HepG2 (cell line): ENCODE measurements at regions of chr6 and their contacts with region 1.

Region 1: DNA sequence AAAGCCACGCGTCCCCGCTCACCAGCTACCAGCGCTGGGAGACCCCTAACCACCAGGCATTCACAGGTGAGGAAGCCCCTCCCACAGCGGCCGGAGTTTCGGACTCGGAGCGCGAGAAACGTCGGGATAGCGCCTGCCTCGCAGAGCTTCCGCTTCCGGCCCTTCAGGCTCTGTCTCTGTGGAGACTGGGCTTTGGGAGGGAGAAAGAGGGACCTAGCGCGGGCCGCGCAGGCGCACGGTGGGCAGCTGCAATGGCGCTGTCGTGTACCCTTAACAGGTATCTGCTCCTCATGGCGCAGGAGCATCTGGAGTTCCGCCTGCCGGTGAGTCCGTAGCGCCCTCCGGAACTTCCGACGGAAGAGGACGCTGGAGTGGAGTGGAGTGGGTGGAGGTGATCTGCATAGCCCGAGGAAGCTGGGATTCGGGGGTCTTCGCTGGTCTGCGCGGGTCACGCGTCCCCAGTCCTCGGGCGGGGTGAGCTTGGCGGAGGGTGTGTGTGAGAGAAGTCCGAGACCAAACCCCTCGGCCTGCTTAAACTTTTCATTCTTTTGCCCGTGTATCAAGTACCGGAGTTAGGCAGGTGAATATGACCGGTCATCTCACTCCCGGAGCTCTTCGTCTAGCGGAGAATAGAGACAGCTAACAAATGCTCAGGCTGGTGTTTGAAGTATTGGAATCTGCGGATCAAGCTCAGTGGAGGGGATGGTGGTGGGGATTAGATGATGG is at the start of gene TRMT11:
- DNase-seq: peak; percentile 97
- ATAC-seq: peak; percentile 98
- H3K4me3 ChIP-seq: peak within 1 kb of the TSS; percentile 80 to 95 (median 84)
- H3K27ac ChIP-seq: peak within 1 kb of the TSS; percentile 87
- H3K4me1 ChIP-seq: peaks cover 62% of the 10 kb centered on the region
- H3K27me3 ChIP-seq: no peaks in the 10 kb centered on the region; a peak in 1 of 5 replicates
- CTCF ChIP-seq: peak; percentile 46
- EP300 ChIP-seq: peak in 1 of 2 experiments; percentile 6; a peak in 3 of 4 replicates
- POLR2A ChIP-seq: peak; percentile 96 to 98
- RAD21 ChIP-seq: peak; percentile 47
- total RNA-seq, gene TRMT11: 66.0 and 81.9 TPM in 2 replicates

Region 2: DNA sequence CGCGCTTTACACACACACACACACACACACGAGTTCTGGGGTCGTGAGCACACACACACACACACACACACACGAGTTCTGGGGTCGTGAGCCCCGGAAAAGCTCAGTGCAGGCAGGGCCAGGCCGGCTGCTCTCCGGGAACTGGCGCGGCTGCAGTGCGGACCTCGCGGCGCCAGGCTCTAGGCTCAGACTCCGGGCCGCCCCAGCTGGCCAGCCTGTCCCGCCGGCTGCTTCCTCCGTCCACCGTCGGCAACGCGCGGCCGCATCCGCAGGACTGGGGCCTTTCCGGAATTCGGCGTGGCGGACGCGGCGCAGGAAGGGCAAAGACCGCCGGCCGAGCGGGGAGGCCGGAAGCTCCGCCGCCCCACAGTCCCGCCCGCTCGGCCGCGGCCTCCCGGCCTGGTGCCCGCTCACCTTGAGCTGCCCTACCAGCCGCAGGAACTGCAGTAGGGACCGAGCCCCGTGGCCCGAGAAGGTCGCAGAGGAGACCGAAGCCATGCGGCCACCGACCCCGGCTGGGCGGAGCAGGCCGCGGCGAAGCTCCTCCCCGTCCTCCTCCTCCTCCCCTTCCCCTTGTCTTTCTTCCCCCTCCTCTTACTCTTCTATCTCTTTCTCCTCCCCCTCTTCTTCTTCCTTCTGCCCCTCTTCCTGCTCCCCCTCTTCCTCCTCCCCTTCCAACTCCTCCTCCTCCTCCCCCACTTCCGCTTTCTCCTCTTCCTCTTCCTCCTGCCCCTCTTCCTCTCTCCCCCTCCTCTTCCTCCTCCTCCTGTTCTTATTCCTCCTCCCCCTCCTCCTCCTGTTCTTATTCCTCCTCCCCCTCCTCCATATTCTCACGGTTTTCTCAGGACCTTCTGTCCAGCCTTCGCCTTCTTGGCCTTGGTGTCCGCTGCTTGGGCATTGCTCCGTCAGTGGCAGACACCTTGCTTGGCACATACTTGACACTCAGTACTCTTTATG is 684.8 kb before region 1 on chr6 and contains the start of gene HDDC2:
- CTCF ChIA-PET with region 1: no interaction called
- POLR2A ChIA-PET with region 1: interaction called, 15 read pairs
- in situ Hi-C with region 1: no loop called
- intact Hi-C with region 1: no loop called
- DNase-seq: peak; percentile 68
- ATAC-seq: peak; percentile 99
- H3K4me3 ChIP-seq: peak within 1 kb of the TSS; percentile 54 to 85 (median 84)
- H3K27ac ChIP-seq: peak within 1 kb of the TSS; percentile 67
- H3K4me1 ChIP-seq: peaks cover 32% of the 10 kb centered on the region
- H3K27me3 ChIP-seq: peaks cover 0 to 4% of the 10 kb centered on the region in 2 experiments; a peak in 1 of 5 replicates
- CTCF ChIP-seq: peak; percentile 7; the same call in 1 of the 2 replicates
- EP300 ChIP-seq: peak in 1 of 2 experiments; percentile 38; a peak in 2 of 4 replicates
- POLR2A ChIP-seq: peak; percentile 82 to 83
- RAD21 ChIP-seq: peak; percentile 71
- total RNA-seq, gene HDDC2: 78.7 and 90.7 TPM in 2 replicates

Region 3: GRCh38 chr6:125779924-125780539 is 206.4 kb before region 1 on chr6:
- CTCF ChIA-PET with region 1: no interaction called
- POLR2A ChIA-PET with region 1: interaction called, 13 read pairs
- in situ Hi-C with region 1: no loop called
- intact Hi-C with region 1: no loop called
- DNase-seq: peak; percentile 96
- ATAC-seq: peak; percentile 91
- H3K4me3 ChIP-seq: peak overlapping the region; percentile 60 to 85 (median 81)
- H3K27ac ChIP-seq: peak overlapping the region; percentile 83
- H3K4me1 ChIP-seq: peaks cover 30% of the 10 kb centered on the region
- H3K27me3 ChIP-seq: no peaks in the 10 kb centered on the region; a peak in 1 of 5 replicates
- CTCF ChIP-seq: no peak; the same call in 1 of the 2 replicates
- EP300 ChIP-seq: no peak; a peak in 1 of 4 replicates
- POLR2A ChIP-seq: no peak
- RAD21 ChIP-seq: no peak

Region 4: GRCh38 chr6:125899726-125900182 is 86.7 kb before region 1 on chr6:
- CTCF ChIA-PET with region 1: no interaction called
- POLR2A ChIA-PET with region 1: interaction called, 16 read pairs
- in situ Hi-C with region 1: no loop called
- intact Hi-C with region 1: no loop called
- DNase-seq: peak; percentile 86
- ATAC-seq: peak; percentile 99
- H3K4me3 ChIP-seq: peak overlapping the region; percentile 39 to 59 (median 56); a peak in 4 of 6 replicates
- H3K27ac ChIP-seq: peak overlapping the region; percentile 81
- H3K4me1 ChIP-seq: peaks cover 53% of the 10 kb centered on the region
- H3K27me3 ChIP-seq: no peaks in the 10 kb centered on the region
- CTCF ChIP-seq: peak; percentile 48
- EP300 ChIP-seq: peak in 1 of 2 experiments; percentile 58; a peak in 1 of 4 replicates
- POLR2A ChIP-seq: peak; percentile 54 to 56; a peak in 3 of 4 replicates
- RAD21 ChIP-seq: no peak

Region 5: DNA sequence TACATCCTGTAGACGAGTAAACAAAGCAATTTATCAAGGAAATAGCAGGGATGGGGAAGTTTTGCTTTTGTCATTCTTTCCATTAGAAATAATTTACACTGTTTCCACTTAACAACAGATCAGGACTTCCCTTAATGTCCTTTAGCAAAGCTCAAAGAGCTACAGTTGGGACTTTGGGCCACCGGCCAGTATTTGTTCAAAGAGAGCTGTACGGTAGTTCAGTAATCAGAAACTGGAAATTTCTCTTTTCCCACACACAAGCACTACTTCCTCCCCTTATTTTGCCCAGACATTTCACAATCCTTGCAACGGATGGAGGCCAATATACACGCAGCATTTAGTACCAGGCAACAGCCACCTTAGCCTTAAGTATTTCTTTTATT is 42.0 kb before region 1 on chr6:
- CTCF ChIA-PET with region 1: no interaction called
- POLR2A ChIA-PET with region 1: interaction called, 10 read pairs
- in situ Hi-C with region 1: no loop called
- intact Hi-C with region 1: no loop called
- DNase-seq: peak; percentile 98
- ATAC-seq: peak; percentile 96
- H3K4me3 ChIP-seq: peak overlapping the region in 2 of 3 experiments; percentile 35 to 56; a peak in 3 of 6 replicates
- H3K27ac ChIP-seq: peak overlapping the region; percentile 92
- H3K4me1 ChIP-seq: peaks cover 85% of the 10 kb centered on the region
- H3K27me3 ChIP-seq: no peaks in the 10 kb centered on the region
- CTCF ChIP-seq: no peak
- EP300 ChIP-seq: peak; percentile 56 to 88; a peak in 2 of 4 replicates
- POLR2A ChIP-seq: no peak
- RAD21 ChIP-seq: no peak

Region 6: DNA sequence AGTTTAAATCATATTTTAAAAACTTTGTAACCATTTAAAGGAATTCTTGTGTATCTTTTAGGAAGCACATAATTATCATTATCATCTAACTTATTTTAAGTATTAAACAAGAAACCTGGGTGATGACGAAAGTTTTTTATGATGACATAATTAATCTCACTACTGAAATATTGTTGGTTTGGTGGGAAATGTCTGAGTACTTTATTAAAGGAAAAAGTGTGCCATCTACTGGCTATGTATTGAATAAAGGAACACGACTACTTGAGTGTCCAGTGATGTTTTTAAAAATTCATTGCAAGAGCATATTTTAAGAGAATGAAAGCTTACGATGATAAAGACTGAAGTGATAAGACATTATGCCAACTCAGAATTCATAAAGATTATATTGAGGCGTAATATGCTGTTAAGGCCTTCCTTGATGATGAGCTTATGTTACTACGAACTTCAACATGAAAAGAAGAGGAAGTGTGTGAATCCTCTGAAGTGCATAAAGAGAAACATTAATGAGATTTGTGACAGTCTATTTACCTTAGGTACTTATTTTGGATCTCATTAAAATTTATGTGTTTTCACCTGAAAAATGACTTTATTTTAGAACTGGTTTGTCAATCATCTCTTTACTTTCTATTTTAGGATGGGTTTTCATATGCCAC is 12.1 kb before region 1 on chr6:
- CTCF ChIA-PET with region 1: no interaction called
- POLR2A ChIA-PET with region 1: interaction called, 11 read pairs
- in situ Hi-C with region 1: no loop called
- intact Hi-C with region 1: no loop called
- DNase-seq: peak; percentile 56
- ATAC-seq: peak; percentile 69
- H3K4me3 ChIP-seq: no peak overlapping the region
- H3K27ac ChIP-seq: no peak overlapping the region
- H3K4me1 ChIP-seq: no peaks in the 10 kb centered on the region
- H3K27me3 ChIP-seq: no peaks in the 10 kb centered on the region
- CTCF ChIP-seq: peak; percentile 65
- EP300 ChIP-seq: no peak
- POLR2A ChIP-seq: no peak
- RAD21 ChIP-seq: no peak